ENCODE measurements at regions of chr2 and their contacts with region 1.

Region 1: DNA sequence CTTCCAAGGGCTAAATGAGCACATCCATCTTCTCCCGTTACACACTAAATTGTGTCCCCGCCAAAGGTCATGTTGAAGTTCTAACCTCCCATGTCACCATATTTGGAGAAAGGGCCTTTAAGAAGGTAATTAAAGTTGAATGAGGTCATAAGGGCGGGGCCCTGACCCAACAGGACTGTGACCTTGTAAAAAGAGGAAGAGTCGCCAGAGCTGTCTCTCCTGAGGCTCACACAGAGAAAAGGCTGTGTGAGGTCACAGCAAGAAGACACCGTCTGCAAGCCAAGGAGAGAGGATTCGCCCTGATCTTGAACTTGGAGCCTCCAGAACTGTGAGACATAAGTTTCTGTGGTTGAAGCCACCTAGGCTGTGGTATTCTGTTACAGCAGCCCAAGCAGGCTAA is 24.1 kb downstream of the TRABD2A start:
- DNase-seq: peak in 4 of 9 experiments; percentile 44 to 66 (median 51)
- ATAC-seq: peak; percentile 47
- H3K4me3 ChIP-seq: peak overlapping the region in 1 of 2 experiments; percentile 21
- H3K4me3 Mint-ChIP-seq: peak overlapping the region; percentile 75
- H3K27ac ChIP-seq: peak overlapping the region; percentile 53 to 60
- H3K27ac Mint-ChIP-seq: peak overlapping the region; percentile 98
- H3K4me1 ChIP-seq: peaks cover 96% of the 10 kb centered on the region
- H3K4me1 Mint-ChIP-seq: peaks cover 94% of the 10 kb centered on the region
- H3K27me3 ChIP-seq: no peaks in the 10 kb centered on the region
- H3K27me3 Mint-ChIP-seq: no peaks in the 10 kb centered on the region
- CTCF ChIP-seq: no peak

Region 2: GRCh38 chr2:84649487-84650142 is 207.2 kb before region 1 on chr2:
- CTCF ChIA-PET with region 1: interaction called, 3 read pairs
- POLR2A ChIA-PET with region 1: no interaction called
- intact Hi-C with region 1: loop called in 1 of 2 experiments (anchors 5 kb)
- DNase-seq: peak in 1 of 9 experiments; percentile 43
- ATAC-seq: peak; percentile 54
- H3K4me3 ChIP-seq: no peak overlapping the region
- H3K4me3 Mint-ChIP-seq: peak overlapping the region; percentile 40
- H3K27ac ChIP-seq: peak overlapping the region in 1 of 2 experiments; percentile 11
- H3K27ac Mint-ChIP-seq: peak overlapping the region; percentile 86
- H3K4me1 ChIP-seq: peaks cover 81% of the 10 kb centered on the region
- H3K4me1 Mint-ChIP-seq: peaks cover 79% of the 10 kb centered on the region
- H3K27me3 ChIP-seq: no peaks in the 10 kb centered on the region
- H3K27me3 Mint-ChIP-seq: no peaks in the 10 kb centered on the region
- CTCF ChIP-seq: no peak

Region 3: DNA sequence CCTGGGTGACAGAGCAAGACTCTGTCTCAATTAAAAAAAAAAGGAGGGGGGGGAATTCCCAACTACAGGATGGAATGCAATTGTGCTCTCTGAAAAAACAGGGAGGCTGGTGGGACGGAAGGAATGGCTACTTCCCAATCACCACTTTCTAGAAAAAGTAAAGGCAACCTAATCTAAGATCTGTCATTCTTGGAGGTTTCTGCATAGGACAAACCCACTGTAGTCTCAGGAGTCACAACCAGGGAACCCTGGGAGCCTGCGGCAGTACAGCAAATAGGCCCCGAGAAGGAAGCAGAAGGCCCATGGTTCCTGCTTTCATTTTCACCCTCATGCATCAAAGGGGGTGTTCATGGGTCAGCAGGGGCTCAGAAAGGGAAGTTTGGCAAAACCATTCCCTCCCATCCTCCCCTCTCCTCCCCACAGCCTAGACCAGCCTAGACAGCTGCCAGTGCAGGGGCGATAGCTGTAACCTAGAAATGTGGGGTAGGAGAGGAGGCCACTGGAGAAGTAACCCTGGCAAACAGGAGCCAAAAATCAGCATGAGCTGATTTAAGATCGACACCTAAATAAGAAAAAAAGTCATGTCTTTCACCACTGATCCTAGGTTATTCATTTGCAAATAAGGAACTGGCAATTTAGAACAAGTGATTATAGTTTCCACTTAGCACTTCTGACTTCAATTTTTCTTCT is 23.9 kb before region 1 on chr2:
- CTCF ChIA-PET with region 1: no interaction called
- POLR2A ChIA-PET with region 1: interaction called, 4 read pairs
- intact Hi-C with region 1: loop called (anchors 1 to 2 kb)
- DNase-seq: peak in 1 of 9 experiments; percentile 56
- ATAC-seq: peak; percentile 51
- H3K4me3 ChIP-seq: peak overlapping the region in 1 of 2 experiments; percentile 6
- H3K4me3 Mint-ChIP-seq: peak overlapping the region; percentile 79
- H3K27ac ChIP-seq: peak overlapping the region; percentile 7 to 58
- H3K27ac Mint-ChIP-seq: no peak overlapping the region
- H3K4me1 ChIP-seq: peaks cover 90% of the 10 kb centered on the region
- H3K4me1 Mint-ChIP-seq: peaks cover 45% of the 10 kb centered on the region
- H3K27me3 ChIP-seq: peaks cover 0 to 3% of the 10 kb centered on the region in 2 experiments
- H3K27me3 Mint-ChIP-seq: no peaks in the 10 kb centered on the region
- CTCF ChIP-seq: no peak

Region 4: GRCh38 chr2:84840306-84840705 is 16.5 kb before region 1 on chr2:
- CTCF ChIA-PET with region 1: interaction called, 16 read pairs
- POLR2A ChIA-PET with region 1: interaction called, 7 read pairs
- intact Hi-C with region 1: loop called (anchors 2 kb)
- DNase-seq: no peak
- ATAC-seq: peak; percentile 19
- H3K4me3 ChIP-seq: peak overlapping the region in 1 of 2 experiments; percentile 31
- H3K4me3 Mint-ChIP-seq: peak overlapping the region; percentile 71
- H3K27ac ChIP-seq: peak overlapping the region; percentile 64 to 72
- H3K27ac Mint-ChIP-seq: peak overlapping the region; percentile 93
- H3K4me1 ChIP-seq: peaks cover 90% of the 10 kb centered on the region
- H3K4me1 Mint-ChIP-seq: peaks cover 88% of the 10 kb centered on the region
- H3K27me3 ChIP-seq: no peaks in the 10 kb centered on the region
- H3K27me3 Mint-ChIP-seq: no peaks in the 10 kb centered on the region
- CTCF ChIP-seq: no peak

Region 5: GRCh38 chr2:84846041-84846663 is 10.6 kb before region 1 on chr2:
- CTCF ChIA-PET with region 1: interaction called, 16 read pairs
- POLR2A ChIA-PET with region 1: interaction called, 8 read pairs
- intact Hi-C with region 1: no loop called
- DNase-seq: peak in 7 of 9 experiments; percentile 37 to 87 (median 65)
- ATAC-seq: peak; percentile 70
- H3K4me3 ChIP-seq: peak overlapping the region in 1 of 2 experiments; percentile 7
- H3K4me3 Mint-ChIP-seq: peak overlapping the region; percentile 65
- H3K27ac ChIP-seq: peak overlapping the region; percentile 68 to 88
- H3K27ac Mint-ChIP-seq: peak overlapping the region; percentile 94
- H3K4me1 ChIP-seq: peaks cover 97% of the 10 kb centered on the region
- H3K4me1 Mint-ChIP-seq: peaks cover 94% of the 10 kb centered on the region
- H3K27me3 ChIP-seq: no peaks in the 10 kb centered on the region
- H3K27me3 Mint-ChIP-seq: no peaks in the 10 kb centered on the region
- CTCF ChIP-seq: no peak

Measured in CD8-positive, alpha-beta T cell (primary cell).